Panc1 (cell line): ENCODE measurements at regions of chr2 and their contacts with region 1.

Region 1: GRCh38 chr2:74482801-74483674 is at the starts of genes CCDC142 and TTC31:
- DNase-seq: peak; percentile 93
- ATAC-seq: peak; percentile 97
- H3K4me3 ChIP-seq: peak within 1 kb of the TSS; percentile 84 to 99
- H3K27ac ChIP-seq: peak within 1 kb of the TSS; percentile 99
- H3K4me1 ChIP-seq: peaks cover 16% of the 10 kb centered on the region
- H3K27me3 ChIP-seq: no peaks in the 10 kb centered on the region
- CTCF ChIP-seq: peak; percentile 96
- total RNA-seq, gene CCDC142: 24.2 TPM
- total RNA-seq, gene TTC31: 38.7 TPM

Region 2: GRCh38 chr2:74529357-74530238 is 46.6 kb after region 1 on chr2 and contains the starts of genes AUP1 and HTRA2:
- CTCF ChIA-PET with region 1: interaction called, 7 read pairs
- POLR2A ChIA-PET with region 1: no interaction called
- in situ Hi-C with region 1: no loop called
- intact Hi-C with region 1: loop called (anchors 2 kb)
- DNase-seq: peak; percentile 96
- ATAC-seq: peak; percentile 96
- H3K4me3 ChIP-seq: peak within 1 kb of the TSS; percentile 87 to 99
- H3K27ac ChIP-seq: peak within 1 kb of the TSS; percentile 92
- H3K4me1 ChIP-seq: peaks cover 6% of the 10 kb centered on the region
- H3K27me3 ChIP-seq: no peaks in the 10 kb centered on the region
- CTCF ChIP-seq: no peak
- total RNA-seq, gene AUP1: 142 TPM
- total RNA-seq, gene HTRA2: 21.2 TPM

Region 3: DNA sequence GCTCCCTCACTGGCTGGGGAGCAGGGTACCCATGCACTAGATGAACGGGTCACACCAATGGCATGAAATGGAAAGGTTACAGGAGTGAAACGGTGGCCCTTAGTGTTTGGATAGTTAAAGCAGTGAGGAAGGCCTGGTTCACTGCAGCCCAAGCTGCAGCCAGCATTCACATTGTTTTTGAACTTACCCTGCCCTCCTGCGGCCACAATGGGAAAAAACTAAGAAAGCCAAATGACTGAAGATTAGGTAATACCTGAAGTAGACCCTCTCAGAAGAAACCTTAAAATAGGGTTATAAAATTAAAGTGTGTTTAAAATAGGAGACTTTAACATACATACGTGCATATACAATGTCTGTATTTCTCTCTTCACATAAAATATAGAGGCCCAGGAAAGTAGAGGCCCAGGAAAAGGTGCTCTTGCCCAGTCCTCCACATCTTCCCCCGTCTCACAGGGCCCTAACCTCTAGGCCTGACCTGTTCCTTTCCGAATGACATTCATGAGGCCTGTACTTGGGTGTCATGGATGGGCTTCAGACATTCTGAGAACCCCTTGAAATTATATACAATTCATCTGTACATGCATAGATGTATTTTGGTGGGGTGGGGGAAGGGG is 104.7 kb after region 1 on chr2:
- CTCF ChIA-PET with region 1: interaction called, 9 read pairs
- POLR2A ChIA-PET with region 1: no interaction called
- in situ Hi-C with region 1: no loop called
- intact Hi-C with region 1: loop called (anchors 5 kb)
- DNase-seq: peak; percentile 61
- ATAC-seq: peak; percentile 89
- H3K4me3 ChIP-seq: no peak overlapping the region
- H3K27ac ChIP-seq: no peak overlapping the region
- H3K4me1 ChIP-seq: no peaks in the 10 kb centered on the region
- H3K27me3 ChIP-seq: peaks cover 11% of the 10 kb centered on the region
- CTCF ChIP-seq: peak; percentile 87